Activated CD8-positive, alpha-beta T cell treated with anti-CD3 and anti-CD28 coated beads for 36 hours (primary cell): ENCODE measurements at regions of chr5 and their contacts with region 1.

Region 1: GRCh38 chr5:50744776-50745175 is 78.3 kb downstream of the PARP8 start:
- DNase-seq: no peak
- ATAC-seq: peak; percentile 55
- H3K4me3 Mint-ChIP-seq: peak overlapping the region; percentile 73
- H3K27ac Mint-ChIP-seq: peak overlapping the region; percentile 85
- H3K4me1 Mint-ChIP-seq: peaks cover 66% of the 10 kb centered on the region
- H3K27me3 Mint-ChIP-seq: no peaks in the 10 kb centered on the region
- CTCF ChIP-seq: no peak

Region 2: GRCh38 chr5:50435168-50435567 is 309.6 kb before region 1 on chr5:
- CTCF ChIA-PET with region 1: no interaction called
- POLR2A ChIA-PET with region 1: interaction called, 3 read pairs
- intact Hi-C with region 1: loop called (anchors 10 kb)
- DNase-seq: peak; percentile 25
- ATAC-seq: peak; percentile 82
- H3K4me3 Mint-ChIP-seq: peak overlapping the region; percentile 60
- H3K27ac Mint-ChIP-seq: peak overlapping the region; percentile 87
- H3K4me1 Mint-ChIP-seq: peaks cover 76% of the 10 kb centered on the region
- H3K27me3 Mint-ChIP-seq: no peaks in the 10 kb centered on the region
- CTCF ChIP-seq: no peak

Region 3: GRCh38 chr5:50646591-50646990 is 98.2 kb before region 1 on chr5:
- CTCF ChIA-PET with region 1: no interaction called
- POLR2A ChIA-PET with region 1: no interaction called
- intact Hi-C with region 1: no loop called
- DNase-seq: no peak
- ATAC-seq: no peak
- H3K4me3 Mint-ChIP-seq: no peak overlapping the region
- H3K27ac Mint-ChIP-seq: no peak overlapping the region
- H3K4me1 Mint-ChIP-seq: peaks cover 36% of the 10 kb centered on the region
- H3K27me3 Mint-ChIP-seq: no peaks in the 10 kb centered on the region
- CTCF ChIP-seq: no peak

Region 4: GRCh38 chr5:50667653-50668595 is 76.9 kb before region 1 on chr5:
- CTCF ChIA-PET with region 1: interaction called, 4 read pairs
- POLR2A ChIA-PET with region 1: interaction called, 13 read pairs
- intact Hi-C with region 1: loop called (anchors 5 kb)
- DNase-seq: peak; percentile 90
- ATAC-seq: peak; percentile 76
- H3K4me3 Mint-ChIP-seq: peak overlapping the region; percentile 90
- H3K27ac Mint-ChIP-seq: peak overlapping the region; percentile 99
- H3K4me1 Mint-ChIP-seq: peaks cover 43% of the 10 kb centered on the region
- H3K27me3 Mint-ChIP-seq: no peaks in the 10 kb centered on the region
- CTCF ChIP-seq: no peak

Region 5: GRCh38 chr5:50684721-50685120 is 60.1 kb before region 1 on chr5:
- CTCF ChIA-PET with region 1: no interaction called
- POLR2A ChIA-PET with region 1: no interaction called
- intact Hi-C with region 1: no loop called
- DNase-seq: no peak
- ATAC-seq: no peak
- H3K4me3 Mint-ChIP-seq: no peak overlapping the region
- H3K27ac Mint-ChIP-seq: peak overlapping the region; percentile 11
- H3K4me1 Mint-ChIP-seq: peaks cover 67% of the 10 kb centered on the region
- H3K27me3 Mint-ChIP-seq: no peaks in the 10 kb centered on the region
- CTCF ChIP-seq: no peak

Region 6: GRCh38 chr5:50711273-50711672 is 33.5 kb before region 1 on chr5:
- CTCF ChIA-PET with region 1: interaction called, 3 read pairs
- POLR2A ChIA-PET with region 1: no interaction called
- intact Hi-C with region 1: loop called (anchors 5 kb)
- DNase-seq: peak; percentile 77
- ATAC-seq: peak; percentile 90
- H3K4me3 Mint-ChIP-seq: peak overlapping the region; percentile 64
- H3K27ac Mint-ChIP-seq: peak overlapping the region; percentile 86
- H3K4me1 Mint-ChIP-seq: peaks cover 82% of the 10 kb centered on the region
- H3K27me3 Mint-ChIP-seq: no peaks in the 10 kb centered on the region
- CTCF ChIP-seq: no peak

Region 7: GRCh38 chr5:50763846-50764245 is 19.1 kb after region 1 on chr5:
- CTCF ChIA-PET with region 1: no interaction called
- POLR2A ChIA-PET with region 1: no interaction called
- intact Hi-C with region 1: no loop called
- DNase-seq: no peak
- ATAC-seq: no peak
- H3K4me3 Mint-ChIP-seq: no peak overlapping the region
- H3K27ac Mint-ChIP-seq: no peak overlapping the region
- H3K4me1 Mint-ChIP-seq: peaks cover 40% of the 10 kb centered on the region
- H3K27me3 Mint-ChIP-seq: no peaks in the 10 kb centered on the region
- CTCF ChIP-seq: no peak